ENCODE measurements at regions of chr15 and their contacts with region 1.

Region 1: DNA sequence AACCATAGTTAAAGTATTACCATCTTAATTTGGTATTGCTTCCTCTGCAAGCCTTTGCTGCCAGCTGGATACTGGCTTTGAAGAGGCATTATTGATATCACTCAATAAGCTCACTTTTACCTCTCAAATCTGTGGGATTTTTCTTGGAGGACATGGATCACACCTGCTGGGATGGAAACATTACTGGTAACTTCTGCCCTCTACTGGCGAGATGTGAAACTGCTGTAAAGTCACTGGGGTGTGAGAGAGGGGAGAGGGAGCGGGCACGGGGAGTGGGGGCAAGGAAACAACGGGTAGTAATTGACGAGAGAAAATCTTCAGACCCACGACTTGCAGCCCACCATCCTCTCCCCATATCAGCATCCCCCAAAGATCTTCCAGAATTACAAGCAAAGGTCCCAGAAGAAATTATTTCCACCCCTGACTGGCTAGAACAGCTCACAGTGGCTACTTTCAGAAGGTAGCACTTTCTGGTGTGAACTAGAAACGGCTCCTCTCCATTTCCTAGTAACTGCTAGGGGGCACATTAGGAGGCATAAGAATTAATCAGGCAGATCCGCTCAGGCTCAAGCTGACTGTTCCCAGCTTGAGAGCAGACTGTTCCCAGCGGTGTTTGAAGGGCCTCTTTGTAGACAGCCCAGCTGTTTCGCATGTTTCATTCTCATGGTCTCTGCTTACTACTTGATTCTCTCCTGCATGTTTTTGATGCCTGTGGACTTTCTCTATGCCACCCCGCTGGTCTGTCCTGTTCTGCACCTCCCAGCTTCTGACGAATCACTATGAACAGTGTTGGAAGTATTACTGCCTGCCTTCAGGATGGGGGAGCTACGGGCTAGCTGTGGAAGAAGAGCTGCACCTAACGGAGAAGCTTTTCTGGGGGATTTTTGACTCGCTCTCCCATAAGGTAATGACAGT is 230.4 kb upstream of the CHRM5 start:
- DNase-seq: peak; percentile 60
- ATAC-seq: peak; percentile 39
- H3K4me3 Mint-ChIP-seq: no peak overlapping the region
- H3K27ac Mint-ChIP-seq: no peak overlapping the region
- H3K4me1 Mint-ChIP-seq: no peaks in the 10 kb centered on the region
- H3K27me3 Mint-ChIP-seq: peaks cover 2% of the 10 kb centered on the region

Region 2: GRCh38 chr15:33292717-33293307 is 445.1 kb before region 1 on chr15:
- CTCF ChIA-PET with region 1: interaction called, 18 read pairs
- POLR2A ChIA-PET with region 1: no interaction called
- intact Hi-C with region 1: no loop called
- DNase-seq: peak; percentile 77
- ATAC-seq: no peak
- H3K4me3 Mint-ChIP-seq: no peak overlapping the region
- H3K27ac Mint-ChIP-seq: no peak overlapping the region
- H3K4me1 Mint-ChIP-seq: no peaks in the 10 kb centered on the region
- H3K27me3 Mint-ChIP-seq: no peaks in the 10 kb centered on the region

Region 3: GRCh38 chr15:33700695-33701304 is 37.1 kb before region 1 on chr15:
- CTCF ChIA-PET with region 1: interaction called, 10 read pairs
- POLR2A ChIA-PET with region 1: no interaction called
- intact Hi-C with region 1: no loop called
- DNase-seq: peak; percentile 77
- ATAC-seq: peak; percentile 77
- H3K4me3 Mint-ChIP-seq: no peak overlapping the region
- H3K27ac Mint-ChIP-seq: no peak overlapping the region
- H3K4me1 Mint-ChIP-seq: no peaks in the 10 kb centered on the region
- H3K27me3 Mint-ChIP-seq: peaks cover 6% of the 10 kb centered on the region

Region 4: DNA sequence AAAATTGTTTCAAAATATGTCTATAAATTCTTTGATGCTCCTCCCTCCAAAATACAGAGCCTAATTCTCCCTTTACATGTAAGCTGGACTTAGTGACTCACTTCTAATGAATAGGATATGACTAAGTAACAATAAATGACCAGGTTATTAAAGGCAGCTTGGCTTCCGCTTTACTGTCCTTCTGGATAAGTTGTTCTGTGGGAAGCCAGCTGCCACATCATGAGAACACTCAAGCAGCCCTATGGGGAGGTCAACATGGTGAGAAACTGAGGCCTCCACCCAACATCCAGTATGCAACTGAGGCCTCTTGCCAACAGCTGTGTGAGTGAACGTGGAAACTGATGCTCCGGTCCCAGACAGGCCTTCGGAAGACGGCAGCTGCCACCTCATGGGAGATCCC is 17.0 kb before region 1 on chr15:
- CTCF ChIA-PET with region 1: interaction called, 17 read pairs
- POLR2A ChIA-PET with region 1: no interaction called
- intact Hi-C with region 1: no loop called
- DNase-seq: no peak
- ATAC-seq: no peak
- H3K4me3 Mint-ChIP-seq: no peak overlapping the region
- H3K27ac Mint-ChIP-seq: no peak overlapping the region
- H3K4me1 Mint-ChIP-seq: peaks cover 5% of the 10 kb centered on the region
- H3K27me3 Mint-ChIP-seq: peaks cover 5% of the 10 kb centered on the region

Region 5: GRCh38 chr15:33808720-33809457 is 70.9 kb after region 1 on chr15:
- CTCF ChIA-PET with region 1: interaction called, 3 read pairs
- POLR2A ChIA-PET with region 1: no interaction called
- intact Hi-C with region 1: loop called in 1 of 2 experiments (anchors 10 kb)
- DNase-seq: no peak
- ATAC-seq: no peak
- H3K4me3 Mint-ChIP-seq: no peak overlapping the region
- H3K27ac Mint-ChIP-seq: no peak overlapping the region
- H3K4me1 Mint-ChIP-seq: no peaks in the 10 kb centered on the region
- H3K27me3 Mint-ChIP-seq: peaks cover 6% of the 10 kb centered on the region

Region 6: DNA sequence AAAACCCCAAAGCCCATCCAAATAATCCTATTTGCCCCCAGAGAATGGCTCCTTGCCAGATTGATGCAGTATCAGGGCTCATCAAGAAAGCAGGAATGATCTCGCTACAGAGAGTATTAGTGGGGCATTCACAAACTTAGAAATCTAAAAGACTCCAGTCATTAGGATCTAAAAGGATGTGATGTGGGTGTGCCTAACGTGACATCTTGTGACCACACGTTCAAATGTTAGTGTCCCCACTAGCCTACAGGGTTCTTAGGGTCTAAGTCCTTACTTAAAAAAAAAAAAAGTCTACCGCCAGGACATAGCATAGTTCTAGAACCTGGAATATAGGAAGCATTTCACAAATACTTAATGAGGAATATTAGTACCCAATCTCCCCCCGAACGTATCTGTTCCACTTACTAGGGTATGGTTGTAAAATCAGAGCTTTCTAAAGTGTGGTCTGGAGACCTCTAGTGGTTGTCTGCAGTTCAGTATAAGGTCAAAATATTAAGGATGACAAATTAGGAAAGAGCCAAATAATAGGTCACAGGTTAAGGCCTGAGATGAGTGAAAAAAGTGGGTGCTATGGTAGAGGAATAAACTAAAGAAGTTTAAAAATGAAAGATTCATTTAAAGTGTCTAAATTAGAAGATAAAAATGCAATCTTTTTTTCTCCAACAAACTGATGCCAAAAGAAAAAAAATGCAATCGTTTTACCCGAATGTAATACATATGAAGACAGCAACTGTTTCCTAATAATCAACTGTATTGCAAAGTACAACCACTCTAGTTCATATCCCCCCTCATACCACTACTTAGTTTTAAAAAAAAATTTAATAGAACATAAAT is 226.1 kb after region 1 on chr15:
- CTCF ChIA-PET with region 1: interaction called, 4 read pairs
- POLR2A ChIA-PET with region 1: no interaction called
- intact Hi-C with region 1: loop called (anchors 1 to 5 kb)
- DNase-seq: no peak
- ATAC-seq: no peak
- H3K4me3 Mint-ChIP-seq: no peak overlapping the region
- H3K27ac Mint-ChIP-seq: no peak overlapping the region
- H3K4me1 Mint-ChIP-seq: no peaks in the 10 kb centered on the region
- H3K27me3 Mint-ChIP-seq: no peaks in the 10 kb centered on the region

Region 7: DNA sequence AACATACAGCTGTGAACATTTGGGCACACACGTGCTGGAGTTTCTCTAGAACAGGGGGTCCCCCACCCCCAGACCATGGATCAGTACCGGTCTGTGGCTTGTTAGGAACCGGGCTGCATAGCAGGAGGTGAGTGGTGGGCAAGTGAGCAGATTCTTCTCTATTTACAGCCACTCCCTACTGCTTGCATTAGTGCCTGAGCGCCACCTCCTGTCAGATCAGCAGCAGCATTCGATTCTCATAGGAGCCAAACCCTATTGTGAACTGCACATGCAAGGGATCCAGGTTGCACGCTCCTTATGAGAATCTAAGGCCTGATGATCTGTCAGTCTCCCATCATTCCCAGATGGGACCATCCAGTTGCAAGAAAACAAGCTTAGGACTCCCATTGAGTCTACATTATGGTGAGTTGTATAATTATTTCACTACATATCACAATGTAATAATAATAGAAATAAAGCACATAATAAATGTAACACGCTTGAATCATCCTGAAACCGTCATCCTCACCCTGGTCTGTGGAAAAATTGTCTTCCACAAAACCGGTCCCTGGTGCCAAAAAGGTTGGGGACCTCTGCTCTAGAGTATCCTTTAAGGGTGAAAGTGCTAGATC is 256.2 kb after region 1 on chr15:
- CTCF ChIA-PET with region 1: interaction called, 5 read pairs
- POLR2A ChIA-PET with region 1: no interaction called
- intact Hi-C with region 1: loop called in 1 of 2 experiments (anchors 10 kb)
- DNase-seq: peak; percentile 39
- ATAC-seq: no peak
- H3K4me3 Mint-ChIP-seq: no peak overlapping the region
- H3K27ac Mint-ChIP-seq: no peak overlapping the region
- H3K4me1 Mint-ChIP-seq: peaks cover 2% of the 10 kb centered on the region
- H3K27me3 Mint-ChIP-seq: no peaks in the 10 kb centered on the region